KBM-7 (cell line): ENCODE measurements at regions of chr7 and their contacts with region 1.

Region 1: GRCh38 chr7:2870471-2870931 is 26.4 kb upstream of the GNA12 start:
- DNase-seq: peak; percentile 78

Region 2: GRCh38 chr7:3094701-3095445 is 224.4 kb after region 1 on chr7:
- in situ Hi-C with region 1: no loop called
- DNase-seq: peak; percentile 89

Region 3: GRCh38 chr7:3154912-3155494 is 284.5 kb after region 1 on chr7:
- in situ Hi-C with region 1: loop called (anchors 10 kb)
- DNase-seq: peak; percentile 84